HEK293T (cell line): ENCODE measurements at regions of chr5 and their contacts with region 1.

Region 1: GRCh38 chr5:154405078-154405792 is 40.6 kb upstream of the SAP30L start:
- DNase-seq: peak; percentile 91

Region 2: GRCh38 chr5:154189819-154190594 is 215.2 kb before region 1 on chr5:
- CTCF ChIA-PET with region 1: interaction called, 14 read pairs
- POLR2A ChIA-PET with region 1: interaction called, 4 read pairs
- DNase-seq: peak; percentile 86

Region 3: GRCh38 chr5:154196955-154197652 is 208.1 kb before region 1 on chr5:
- CTCF ChIA-PET with region 1: interaction called, 10 read pairs
- POLR2A ChIA-PET with region 1: no interaction called
- DNase-seq: no peak

Region 4: GRCh38 chr5:154320224-154321089 is 84.8 kb before region 1 on chr5:
- CTCF ChIA-PET with region 1: no interaction called
- POLR2A ChIA-PET with region 1: no interaction called
- DNase-seq: no peak